Heart left ventricle (tissue), 16 donors: ENCODE measurements at regions of chr14 and their contacts with region 1.

Region 1: GRCh38 chr14:94036313-94037050 is 10.3 kb downstream of the OTUB2 start:
- DNase-seq: peak; percentile 62 to 77 (median 72)
- ATAC-seq: peak; percentile 78 to 92 (median 84)
- H3K4me3 ChIP-seq: no peak overlapping the region
- H3K27ac ChIP-seq: no peak overlapping the region
- H3K4me1 ChIP-seq: peaks cover 0 to 16% (median under 1%) of the 10 kb centered on the region in 12 donors
- H3K27me3 ChIP-seq: no peaks in the 10 kb centered on the region
- CTCF ChIP-seq: peak; percentile 76 to 90 (median 86)
- POLR2A ChIP-seq: no peak

Region 2: GRCh38 chr14:94175011-94175745 is 138.7 kb after region 1 on chr14:
- intact Hi-C with region 1: loop called in 5 of 10 experiments (anchors 2 to 5 kb)
- DNase-seq: peak in 2 of 5 donors; percentile 14 to 28
- ATAC-seq: peak in 1 of 4 donors; percentile 3
- H3K4me3 ChIP-seq: peak overlapping the region in 9 of 12 donors; percentile 43 to 82 (median 66)
- H3K27ac ChIP-seq: no peak overlapping the region
- H3K4me1 ChIP-seq: peaks cover 0 to 23% (median 14%) of the 10 kb centered on the region in 12 donors
- H3K27me3 ChIP-seq: peaks cover 0 to 58% (median 14%) of the 10 kb centered on the region in 9 donors
- CTCF ChIP-seq: no peak
- POLR2A ChIP-seq: no peak

Region 3: GRCh38 chr14:94180655-94181271 is 144.3 kb after region 1 on chr14:
- intact Hi-C with region 1: loop called in 5 of 10 experiments (anchors 2 to 5 kb)
- DNase-seq: no peak
- ATAC-seq: peak; percentile 20 to 59 (median 46)
- H3K4me3 ChIP-seq: peak overlapping the region in 1 of 12 donors; percentile 18
- H3K27ac ChIP-seq: no peak overlapping the region
- H3K4me1 ChIP-seq: peaks cover 0 to 3% (median 0%) of the 10 kb centered on the region in 12 donors
- H3K27me3 ChIP-seq: peaks cover 0 to 55% (median 10%) of the 10 kb centered on the region in 9 donors
- CTCF ChIP-seq: peak; percentile 17 to 67 (median 59)
- POLR2A ChIP-seq: no peak

Region 4: GRCh38 chr14:94867946-94868771 is 831.7 kb after region 1 on chr14:
- intact Hi-C with region 1: no loop called
- DNase-seq: no peak
- ATAC-seq: no peak
- H3K4me3 ChIP-seq: no peak overlapping the region
- H3K27ac ChIP-seq: no peak overlapping the region
- H3K4me1 ChIP-seq: peaks cover 0 to 8% (median 0%) of the 10 kb centered on the region in 12 donors
- H3K27me3 ChIP-seq: peaks cover 0 to 63% (median 12%) of the 10 kb centered on the region in 9 donors
- CTCF ChIP-seq: no peak
- POLR2A ChIP-seq: no peak